CD8-positive, alpha-beta T cell (primary cell): ENCODE measurements at regions of chr19 and their contacts with region 1.

Region 1: GRCh38 chr19:16185123-16185767 is at the start of gene FAM32A:
- DNase-seq: peak; percentile 98 to 99 (median 98)
- ATAC-seq: peak; percentile 94
- H3K4me3 ChIP-seq: peak within 1 kb of the TSS; percentile 90 to 95
- H3K4me3 Mint-ChIP-seq: peak within 1 kb of the TSS; percentile 99
- H3K27ac ChIP-seq: peak within 1 kb of the TSS; percentile 81 to 87
- H3K27ac Mint-ChIP-seq: peak within 1 kb of the TSS; percentile 95
- H3K4me1 ChIP-seq: peaks cover 19% of the 10 kb centered on the region
- H3K4me1 Mint-ChIP-seq: peaks cover 38% of the 10 kb centered on the region
- H3K27me3 ChIP-seq: no peaks in the 10 kb centered on the region
- H3K27me3 Mint-ChIP-seq: peaks cover 4% of the 10 kb centered on the region
- CTCF ChIP-seq: no peak
- total RNA-seq, gene FAM32A: 59.7 to 60.4 TPM

Region 2: GRCh38 chr19:15629003-15629880 is 556.0 kb before region 1 on chr19:
- CTCF ChIA-PET with region 1: interaction called, 14 read pairs
- POLR2A ChIA-PET with region 1: no interaction called
- intact Hi-C with region 1: loop called in 1 of 2 experiments (anchors 1 kb)
- DNase-seq: peak; percentile 81 to 98 (median 85)
- ATAC-seq: peak; percentile 93
- H3K4me3 ChIP-seq: no peak overlapping the region
- H3K4me3 Mint-ChIP-seq: no peak overlapping the region
- H3K27ac ChIP-seq: no peak overlapping the region
- H3K27ac Mint-ChIP-seq: no peak overlapping the region
- H3K4me1 ChIP-seq: peaks cover 5% of the 10 kb centered on the region
- H3K4me1 Mint-ChIP-seq: peaks cover 2% of the 10 kb centered on the region
- H3K27me3 ChIP-seq: no peaks in the 10 kb centered on the region
- H3K27me3 Mint-ChIP-seq: peaks cover 17% of the 10 kb centered on the region
- CTCF ChIP-seq: peak; percentile 91

Region 3: DNA sequence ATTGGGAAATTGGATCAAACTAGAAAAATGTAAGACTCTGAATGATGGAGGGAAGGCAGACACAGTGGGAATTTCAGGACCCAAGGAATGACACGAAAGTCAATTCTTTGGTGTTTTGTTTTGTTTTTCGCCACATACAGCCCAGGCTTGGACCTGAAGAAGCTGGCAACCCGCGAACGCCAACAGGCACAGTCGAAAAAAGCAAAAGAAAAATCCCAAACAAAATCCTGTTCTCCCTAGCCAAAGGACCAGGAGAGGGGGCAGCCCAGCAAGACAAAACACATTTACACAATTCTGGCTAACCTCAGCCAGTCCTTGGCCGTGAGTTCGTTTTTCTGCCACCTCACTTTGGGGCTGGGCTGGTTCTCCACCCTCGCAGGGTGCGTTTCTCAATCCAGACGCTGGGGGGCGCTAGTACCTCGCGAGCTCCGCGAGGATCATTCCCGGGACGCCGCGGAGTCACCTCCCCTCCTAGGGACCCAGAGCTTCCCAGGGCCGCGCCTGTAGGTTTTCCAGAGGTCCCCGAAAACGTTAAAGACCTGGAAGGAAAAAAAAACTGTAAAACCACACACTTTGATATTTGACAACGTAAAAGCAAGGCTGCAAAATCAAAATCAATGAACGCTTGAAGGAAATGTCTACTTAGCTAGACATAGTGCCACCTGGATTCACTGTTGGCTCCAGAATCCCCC is 143.8 kb before region 1 on chr19:
- CTCF ChIA-PET with region 1: interaction called, 74 read pairs
- POLR2A ChIA-PET with region 1: interaction called, 5 read pairs
- intact Hi-C with region 1: loop called (anchors 1 kb)
- DNase-seq: peak; percentile 50 to 86 (median 76)
- ATAC-seq: peak; percentile 91
- H3K4me3 ChIP-seq: no peak overlapping the region
- H3K4me3 Mint-ChIP-seq: peak overlapping the region; percentile 11
- H3K27ac ChIP-seq: no peak overlapping the region
- H3K27ac Mint-ChIP-seq: no peak overlapping the region
- H3K4me1 ChIP-seq: peaks cover 8% of the 10 kb centered on the region
- H3K4me1 Mint-ChIP-seq: peaks cover 16% of the 10 kb centered on the region
- H3K27me3 ChIP-seq: no peaks in the 10 kb centered on the region
- H3K27me3 Mint-ChIP-seq: no peaks in the 10 kb centered on the region
- CTCF ChIP-seq: peak; percentile 96

Region 4: GRCh38 chr19:16143399-16144245 is 41.6 kb before region 1 on chr19 and contains the start of gene HSH2D:
- CTCF ChIA-PET with region 1: interaction called, 4 read pairs
- POLR2A ChIA-PET with region 1: interaction called, 4 read pairs
- intact Hi-C with region 1: loop called in 1 of 2 experiments (anchors 1 kb)
- DNase-seq: peak; percentile 65 to 90 (median 85)
- ATAC-seq: peak; percentile 99
- H3K4me3 ChIP-seq: peak within 1 kb of the TSS; percentile 63 to 70
- H3K4me3 Mint-ChIP-seq: peak within 1 kb of the TSS; percentile 96
- H3K27ac ChIP-seq: peak within 1 kb of the TSS; percentile 69 to 76
- H3K27ac Mint-ChIP-seq: peak within 1 kb of the TSS; percentile 97
- H3K4me1 ChIP-seq: peaks cover 29% of the 10 kb centered on the region
- H3K4me1 Mint-ChIP-seq: peaks cover 37% of the 10 kb centered on the region
- H3K27me3 ChIP-seq: no peaks in the 10 kb centered on the region
- H3K27me3 Mint-ChIP-seq: no peaks in the 10 kb centered on the region
- CTCF ChIP-seq: no peak
- total RNA-seq, gene HSH2D: 35.9 to 37.5 TPM

Region 5: DNA sequence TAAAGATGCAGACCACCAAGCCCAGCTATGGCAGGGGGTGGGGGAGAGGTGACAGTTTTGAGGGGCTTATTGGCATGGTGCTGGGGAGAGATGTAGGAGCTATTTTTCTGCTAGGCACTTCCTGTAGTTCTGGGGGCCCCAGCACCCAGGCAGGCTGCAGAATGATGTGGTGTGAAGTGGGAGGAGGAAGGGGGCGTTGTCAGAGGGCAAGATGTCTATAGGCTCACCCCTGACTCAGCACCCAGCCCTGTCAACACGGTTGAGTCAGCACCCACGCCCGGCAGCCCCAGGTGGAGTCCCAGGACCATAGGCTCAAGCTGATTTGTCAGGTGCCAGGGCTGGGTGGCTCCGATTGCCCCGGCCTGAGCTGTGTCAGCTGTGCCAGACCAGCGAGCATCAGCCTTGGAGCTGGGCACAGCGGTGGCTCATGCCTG is 145.1 kb after region 1 on chr19:
- CTCF ChIA-PET with region 1: no interaction called
- POLR2A ChIA-PET with region 1: interaction called, 11 read pairs
- intact Hi-C with region 1: loop called in 1 of 2 experiments (anchors 1 kb)
- DNase-seq: peak; percentile 88 to 99 (median 95)
- ATAC-seq: peak; percentile 74
- H3K4me3 ChIP-seq: no peak overlapping the region
- H3K4me3 Mint-ChIP-seq: peak overlapping the region; percentile 59
- H3K27ac ChIP-seq: peak overlapping the region; percentile 93 to 99
- H3K27ac Mint-ChIP-seq: peak overlapping the region; percentile 96
- H3K4me1 ChIP-seq: peaks cover 36% of the 10 kb centered on the region
- H3K4me1 Mint-ChIP-seq: peaks cover 46% of the 10 kb centered on the region
- H3K27me3 ChIP-seq: no peaks in the 10 kb centered on the region
- H3K27me3 Mint-ChIP-seq: no peaks in the 10 kb centered on the region
- CTCF ChIP-seq: no peak

Region 6: DNA sequence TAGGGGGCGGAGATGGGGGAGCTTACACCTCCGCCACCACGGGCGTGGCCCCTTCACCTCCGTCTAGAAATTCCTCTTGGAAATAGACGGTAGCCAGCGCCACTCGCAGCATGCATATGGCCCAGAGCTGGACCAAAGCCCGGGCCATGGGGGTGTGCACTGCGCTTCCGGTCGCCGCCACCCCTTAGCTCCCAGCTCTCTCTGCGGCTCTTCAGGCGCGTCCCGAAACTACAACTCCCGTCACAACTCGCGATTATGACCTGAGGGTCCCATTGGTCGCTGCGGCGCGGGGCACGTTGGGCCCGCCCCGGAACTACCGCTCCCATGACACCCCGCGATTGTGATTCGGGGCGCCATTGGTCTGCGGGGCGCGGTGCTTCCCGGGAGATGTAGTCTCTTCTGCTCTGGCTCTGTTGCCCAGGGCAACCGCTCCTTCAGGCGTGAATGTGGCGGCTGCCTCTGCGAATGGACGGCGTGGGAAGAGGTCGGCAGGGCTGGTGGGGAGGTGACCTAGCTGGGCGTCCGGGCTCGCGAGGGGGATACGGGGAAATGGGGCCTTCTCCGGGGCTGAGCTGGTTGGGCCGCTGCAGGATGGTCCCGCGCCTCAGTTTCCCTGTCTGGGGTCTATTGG is 310.9 kb after region 1 on chr19 and contains the starts of genes C19orf44 and CALR3:
- CTCF ChIA-PET with region 1: no interaction called
- POLR2A ChIA-PET with region 1: interaction called, 4 read pairs
- intact Hi-C with region 1: loop called in 1 of 2 experiments (anchors 1 kb)
- DNase-seq: peak; percentile 92 to 98 (median 96)
- ATAC-seq: peak; percentile 99
- H3K4me3 ChIP-seq: peak within 1 kb of the TSS; percentile 66 to 89
- H3K4me3 Mint-ChIP-seq: peak within 1 kb of the TSS; percentile 94
- H3K27ac ChIP-seq: peak within 1 kb of the TSS; percentile 67 to 73
- H3K27ac Mint-ChIP-seq: peak within 1 kb of the TSS; percentile 86
- H3K4me1 ChIP-seq: peaks cover 11% of the 10 kb centered on the region
- H3K4me1 Mint-ChIP-seq: peaks cover 14% of the 10 kb centered on the region
- H3K27me3 ChIP-seq: no peaks in the 10 kb centered on the region
- H3K27me3 Mint-ChIP-seq: no peaks in the 10 kb centered on the region
- CTCF ChIP-seq: no peak
- total RNA-seq, gene C19orf44: 0.52 to 0.61 TPM
- total RNA-seq, gene CALR3: not detected